Activated CD8-positive, alpha-beta memory T cell treated with anti-CD3 and anti-CD28 coated beads, Interleukin-2, amount 10 ng/mL, durations not matched to agents 7 days and 5 days (primary cell): ENCODE measurements at regions of chr1 and their contacts with region 1.

Region 1: DNA sequence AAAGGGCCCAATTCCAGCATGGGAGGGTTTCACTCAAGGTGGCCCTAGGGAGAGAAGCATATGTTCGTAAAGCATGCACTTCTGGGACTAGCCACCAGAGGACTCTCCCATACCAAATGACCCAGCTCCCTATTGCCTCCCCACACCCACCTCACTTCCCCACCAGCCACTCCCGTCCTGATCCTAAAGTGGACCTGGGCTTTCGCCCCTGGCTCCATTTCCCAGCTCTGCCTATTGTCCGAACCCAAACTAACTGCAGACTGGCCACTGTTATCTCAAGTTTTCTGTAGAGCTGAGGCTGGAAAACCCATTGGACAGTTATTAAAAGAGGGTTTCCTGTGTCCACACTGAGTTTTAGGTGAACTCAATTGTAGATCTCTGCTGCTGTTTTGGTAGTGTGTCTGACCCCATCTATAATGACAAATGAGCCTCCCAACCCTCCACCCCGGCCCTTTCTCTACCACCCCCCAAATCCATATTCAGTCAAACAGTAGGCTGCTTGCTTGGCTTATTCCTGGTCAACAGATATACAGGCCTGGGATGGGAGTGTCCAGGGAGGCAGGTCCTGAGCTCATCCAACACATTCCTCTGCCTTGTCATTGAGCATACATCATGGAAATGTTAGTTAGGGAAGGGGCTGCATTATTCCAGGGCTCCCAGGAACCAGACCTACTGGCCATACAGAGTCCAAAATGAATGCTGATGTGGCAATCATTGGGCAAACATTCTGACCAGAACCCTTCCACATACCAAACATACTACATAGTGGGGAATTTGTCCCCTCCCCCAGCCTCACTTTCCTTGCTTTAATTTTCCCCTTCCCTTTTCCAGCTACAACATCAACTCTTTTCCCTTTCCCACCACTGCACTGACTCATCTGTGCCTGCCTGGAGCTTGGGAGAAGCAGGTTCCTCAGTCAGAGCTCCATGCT is 59.2 kb downstream of the ABCA4 start:
- DNase-seq: peak; percentile 47
- ATAC-seq: peak; percentile 71
- H3K4me3 Mint-ChIP-seq: no peak overlapping the region
- H3K27ac Mint-ChIP-seq: no peak overlapping the region
- H3K4me1 Mint-ChIP-seq: no peaks in the 10 kb centered on the region
- H3K27me3 Mint-ChIP-seq: peaks cover 28% of the 10 kb centered on the region

Region 2: DNA sequence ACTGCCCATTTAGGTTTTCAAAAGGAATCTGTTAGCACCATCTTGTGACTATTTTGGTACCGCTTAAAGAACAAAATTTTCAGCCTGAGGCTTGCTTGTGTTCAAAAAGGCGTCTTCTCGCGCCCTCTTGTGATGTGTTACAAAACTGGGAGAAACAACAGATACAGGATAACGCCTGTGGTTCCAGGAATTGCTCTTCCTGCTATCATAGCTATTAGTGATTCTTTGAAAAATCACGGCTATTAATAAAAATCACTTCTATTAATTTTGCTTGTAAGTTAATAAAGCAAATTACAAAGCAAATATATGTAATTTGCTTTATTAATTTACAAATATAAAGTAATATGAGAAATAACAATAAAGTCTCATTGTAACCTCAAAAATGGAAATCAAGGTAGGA is 274.2 kb after region 1 on chr1:
- CTCF ChIA-PET with region 1: interaction called, 33 read pairs
- DNase-seq: no peak
- ATAC-seq: peak; percentile 39
- H3K4me3 Mint-ChIP-seq: no peak overlapping the region
- H3K27ac Mint-ChIP-seq: no peak overlapping the region
- H3K4me1 Mint-ChIP-seq: peaks cover 1% of the 10 kb centered on the region
- H3K27me3 Mint-ChIP-seq: peaks cover 19% of the 10 kb centered on the region

Region 3: DNA sequence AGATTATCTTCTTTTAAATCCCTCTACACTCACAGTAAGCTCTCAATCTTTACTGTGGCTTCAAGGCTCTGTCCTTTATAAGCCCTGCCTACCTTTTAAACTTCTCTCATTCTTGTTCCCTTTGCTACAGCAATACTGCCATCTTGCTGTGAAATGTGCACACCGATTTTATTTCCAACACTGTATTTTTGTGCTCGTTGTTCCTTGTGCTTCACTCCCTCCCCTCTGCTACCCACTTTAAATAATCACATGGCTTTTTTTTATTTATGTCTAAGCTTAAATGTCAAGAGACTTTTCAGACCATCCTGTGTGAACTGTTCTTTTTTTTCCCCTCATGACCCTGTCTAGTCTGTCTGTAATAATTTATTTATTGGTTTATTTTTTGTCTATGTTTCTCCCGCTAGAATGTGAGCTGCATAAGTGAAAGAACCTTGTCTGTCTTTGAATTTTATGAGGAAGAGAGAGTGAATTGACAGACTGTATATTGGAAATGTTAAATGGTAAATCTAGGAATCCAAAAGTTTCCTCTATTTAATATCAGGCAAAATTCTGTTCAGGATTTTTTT is 402.1 kb after region 1 on chr1:
- CTCF ChIA-PET with region 1: interaction called, 13 read pairs
- DNase-seq: no peak
- ATAC-seq: no peak
- H3K4me3 Mint-ChIP-seq: no peak overlapping the region
- H3K27ac Mint-ChIP-seq: no peak overlapping the region
- H3K4me1 Mint-ChIP-seq: no peaks in the 10 kb centered on the region
- H3K27me3 Mint-ChIP-seq: no peaks in the 10 kb centered on the region